Esophagus squamous epithelium (tissue), 5 donors: ENCODE measurements at regions of chr10 and their contacts with region 1.

Region 1: GRCh38 chr10:30534465-30535144 is 94.9 kb downstream of the LYZL2 start:
- DNase-seq: no peak
- H3K4me3 ChIP-seq: no peak overlapping the region
- H3K27ac ChIP-seq: no peak overlapping the region
- H3K4me1 ChIP-seq: peaks cover 0 to 40% (median 6%) of the 10 kb centered on the region in 3 donors
- H3K27me3 ChIP-seq: no peaks in the 10 kb centered on the region
- CTCF ChIP-seq: peak; percentile 81 to 94 (median 90)
- POLR2A ChIP-seq: no peak

Region 2: GRCh38 chr10:30398788-30399187 is 135.8 kb before region 1 on chr10:
- intact Hi-C with region 1: loop called (anchors 5 kb)
- DNase-seq: no peak
- H3K4me3 ChIP-seq: no peak overlapping the region
- H3K27ac ChIP-seq: no peak overlapping the region
- H3K4me1 ChIP-seq: no peaks in the 10 kb centered on the region
- H3K27me3 ChIP-seq: no peaks in the 10 kb centered on the region
- CTCF ChIP-seq: no peak
- POLR2A ChIP-seq: no peak

Region 3: GRCh38 chr10:30413996-30414576 is 120.5 kb before region 1 on chr10:
- intact Hi-C with region 1: loop called (anchors 5 kb)
- DNase-seq: no peak
- H3K4me3 ChIP-seq: no peak overlapping the region
- H3K27ac ChIP-seq: no peak overlapping the region
- H3K4me1 ChIP-seq: peaks cover 0 to 12% (median 10%) of the 10 kb centered on the region in 3 donors
- H3K27me3 ChIP-seq: no peaks in the 10 kb centered on the region
- CTCF ChIP-seq: peak; percentile 64 to 91 (median 85)
- POLR2A ChIP-seq: no peak